Activated T-helper 2 cell treated with anti-CD3 and anti-CD28 coated beads, Interferon-gamma antibody, Interleukin-2, Interleukin-4, amounts not matched to agents 10 μg/mL and 5 μg/mL and 100 μg/mL, durations not matched to agents 14 hours and 24 hours and 36 hours (primary cell): ENCODE measurements at regions of chr6 and their contacts with region 1.

Region 1: GRCh38 chr6:122033539-122034181 is 365.8 kb upstream of the HSF2 start:
- DNase-seq: no peak
- H3K4me3 Mint-ChIP-seq: no peak overlapping the region
- H3K27ac Mint-ChIP-seq: no peak overlapping the region
- H3K4me1 Mint-ChIP-seq: no peaks in the 10 kb centered on the region
- H3K27me3 Mint-ChIP-seq: no peaks in the 10 kb centered on the region

Region 2: DNA sequence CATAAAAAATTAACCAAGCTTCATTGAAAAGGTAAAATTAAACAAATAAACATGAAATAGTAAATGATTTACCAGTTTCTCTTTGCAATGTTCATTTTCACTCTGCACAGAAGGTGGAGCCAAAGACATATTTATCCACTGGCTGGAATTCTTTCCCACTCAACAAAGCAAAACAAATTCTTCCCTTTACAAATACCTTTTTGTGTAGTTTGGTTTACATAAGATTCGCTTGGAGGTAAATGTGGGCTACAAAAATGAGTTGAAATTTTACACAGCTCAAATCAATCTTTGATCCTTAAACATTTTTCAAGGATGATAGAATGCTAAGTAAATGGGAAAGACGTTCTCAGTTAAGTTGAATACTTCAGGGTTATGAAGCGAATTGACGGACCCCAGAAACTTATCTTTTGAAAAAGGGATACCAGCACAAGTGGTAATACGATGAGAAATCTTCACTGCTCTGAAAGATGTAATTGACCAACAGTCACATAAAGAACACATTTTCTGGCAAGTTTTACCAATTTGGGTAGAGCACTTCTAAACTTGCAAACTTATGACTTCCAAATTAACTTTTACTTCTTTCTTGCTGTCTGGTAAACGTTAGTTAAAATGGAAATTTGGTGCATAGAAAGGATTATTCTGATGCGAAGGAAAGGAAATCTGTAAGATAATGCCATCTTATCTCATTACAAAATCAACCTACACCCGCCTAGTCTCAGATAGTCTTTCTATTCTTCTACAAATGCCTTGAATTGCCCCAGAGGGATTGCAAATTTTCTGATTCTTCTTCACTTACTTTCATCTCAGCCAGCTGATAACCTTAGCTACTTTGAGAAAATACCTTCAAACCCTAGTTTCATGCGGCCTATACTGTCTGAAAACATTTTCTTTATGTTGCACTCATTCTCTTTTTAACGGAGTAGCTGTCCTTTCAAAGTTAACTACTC is 602.9 kb before region 1 on chr6:
- intact Hi-C with region 1: loop called (anchors 10 kb)
- DNase-seq: no peak
- H3K4me3 Mint-ChIP-seq: no peak overlapping the region
- H3K27ac Mint-ChIP-seq: no peak overlapping the region
- H3K4me1 Mint-ChIP-seq: peaks cover 1% of the 10 kb centered on the region
- H3K27me3 Mint-ChIP-seq: peaks cover 12% of the 10 kb centered on the region